ENCODE measurements at regions of chr14 and their contacts with region 1.

Region 1: DNA sequence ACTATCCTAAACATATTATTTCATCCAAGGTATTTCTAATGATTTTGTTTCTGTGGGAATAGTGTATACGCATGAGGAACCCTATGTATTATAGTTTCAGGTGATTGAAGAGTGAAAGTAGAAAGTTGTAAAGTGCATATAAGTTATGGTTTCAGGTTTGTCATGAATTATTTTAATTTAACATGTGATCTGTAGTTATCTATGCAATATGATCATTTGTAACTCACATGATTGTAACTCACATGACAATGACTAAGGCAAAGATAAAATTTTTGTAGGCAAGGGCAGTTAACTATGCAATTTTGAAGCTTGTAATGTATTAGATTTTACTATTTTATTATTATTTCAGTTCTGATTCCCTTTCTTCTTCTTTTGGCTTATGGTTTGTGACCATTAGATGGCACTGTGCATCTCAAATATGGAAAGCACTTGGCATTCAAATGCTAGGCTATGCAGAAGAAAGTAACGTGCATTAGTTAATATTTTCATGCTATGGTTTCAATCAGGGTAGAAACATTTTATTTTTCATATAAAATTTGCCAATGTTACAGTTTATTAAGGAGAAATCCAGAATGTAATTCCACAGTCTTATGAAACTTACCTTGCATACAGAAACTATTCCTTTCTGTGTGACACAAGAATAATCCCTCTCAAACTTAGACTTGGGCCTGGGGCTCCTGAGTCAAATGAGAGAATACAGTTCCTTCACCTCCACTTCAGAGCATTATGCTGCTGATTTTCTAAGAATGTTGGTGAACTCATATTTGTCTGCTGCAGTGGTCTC is 15.8 kb upstream of the TMEM30B start:
- DNase-seq: no peak
- H3K4me3 ChIP-seq: no peak overlapping the region
- H3K27ac ChIP-seq: no peak overlapping the region
- H3K4me1 ChIP-seq: peaks cover 0 to 8% (median 0%) of the 10 kb centered on the region in 3 donors
- H3K27me3 ChIP-seq: no peaks in the 10 kb centered on the region
- CTCF ChIP-seq: peak in 5 of 6 experiments; percentile 44 to 77 (median 62)
- POLR2A ChIP-seq: no peak

Region 2: GRCh38 chr14:61837336-61838229 is 540.7 kb after region 1 on chr14:
- intact Hi-C with region 1: loop called (anchors 10 kb)
- DNase-seq: peak; percentile 6
- H3K4me3 ChIP-seq: no peak overlapping the region
- H3K27ac ChIP-seq: no peak overlapping the region
- H3K4me1 ChIP-seq: peaks cover 0 to 11% (median 0%) of the 10 kb centered on the region in 3 donors
- H3K27me3 ChIP-seq: no peaks in the 10 kb centered on the region
- CTCF ChIP-seq: peak; percentile 91 to 96 (median 94)
- POLR2A ChIP-seq: no peak

Measured in esophagus squamous epithelium (tissue), 5 donors.